Left ventricle myocardium superior (tissue), 1 donor: ENCODE measurements at regions of chr12 and their contacts with region 1.

Region 1: GRCh38 chr12:12032851-12033588 is 37.7 kb upstream of the BCL2L14 start:
- DNase-seq: peak; percentile 75
- ATAC-seq: peak; percentile 89

Region 2: DNA sequence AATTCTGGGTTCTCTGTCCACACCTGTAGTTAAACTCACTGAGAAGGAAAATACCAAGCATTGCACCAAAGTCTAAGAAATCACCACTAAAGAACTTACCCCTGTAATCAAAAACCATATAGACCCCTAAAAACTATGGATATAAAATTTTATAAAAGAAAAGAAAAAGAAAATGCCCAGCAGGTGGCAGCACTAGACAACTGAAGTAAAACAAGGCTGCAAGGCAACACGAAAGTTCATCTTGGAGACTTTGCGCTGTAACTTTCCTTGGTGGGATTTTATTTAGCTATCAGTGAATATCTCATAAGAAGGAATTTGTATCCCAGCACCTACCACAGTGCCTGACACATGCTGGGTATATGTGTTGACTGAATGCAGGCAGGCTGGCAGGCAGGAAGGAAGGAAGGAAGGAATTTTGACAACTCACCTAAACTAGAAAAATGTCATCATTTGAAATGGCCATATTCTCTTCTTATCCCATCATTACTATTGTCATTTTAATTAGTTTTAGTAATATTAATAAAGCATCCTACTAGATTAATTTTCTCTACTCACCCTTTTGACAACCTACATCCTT is 451.8 kb before region 1 on chr12:
- intact Hi-C with region 1: loop called (anchors 2 kb)
- DNase-seq: no peak
- ATAC-seq: no peak

Region 3: GRCh38 chr12:11621797-11622423 is 411.1 kb before region 1 on chr12:
- intact Hi-C with region 1: loop called (anchors 5 kb)
- DNase-seq: no peak
- ATAC-seq: peak; percentile 22

Region 4: GRCh38 chr12:13114251-13115052 is 1081.4 kb after region 1 on chr12:
- intact Hi-C with region 1: no loop called
- DNase-seq: no peak
- ATAC-seq: peak; percentile 28